Body of pancreas (tissue), 4 donors: ENCODE measurements at regions of chr4 and their contacts with region 1.

Region 1: GRCh38 chr4:68630373-68630772 is 40.1 kb downstream of the UGT2B15 start:
- DNase-seq: no peak
- ATAC-seq: no peak
- H3K4me3 ChIP-seq: no peak overlapping the region
- H3K27ac ChIP-seq: no peak overlapping the region
- H3K4me1 ChIP-seq: no peaks in the 10 kb centered on the region
- H3K27me3 ChIP-seq: no peaks in the 10 kb centered on the region
- CTCF ChIP-seq: no peak
- POLR2A ChIP-seq: no peak

Region 2: GRCh38 chr4:67437974-67438713 is 1192.2 kb before region 1 on chr4:
- intact Hi-C with region 1: no loop called
- DNase-seq: no peak
- ATAC-seq: no peak
- H3K4me3 ChIP-seq: no peak overlapping the region
- H3K27ac ChIP-seq: no peak overlapping the region
- H3K4me1 ChIP-seq: no peaks in the 10 kb centered on the region
- H3K27me3 ChIP-seq: no peaks in the 10 kb centered on the region
- CTCF ChIP-seq: no peak
- POLR2A ChIP-seq: no peak

Region 3: DNA sequence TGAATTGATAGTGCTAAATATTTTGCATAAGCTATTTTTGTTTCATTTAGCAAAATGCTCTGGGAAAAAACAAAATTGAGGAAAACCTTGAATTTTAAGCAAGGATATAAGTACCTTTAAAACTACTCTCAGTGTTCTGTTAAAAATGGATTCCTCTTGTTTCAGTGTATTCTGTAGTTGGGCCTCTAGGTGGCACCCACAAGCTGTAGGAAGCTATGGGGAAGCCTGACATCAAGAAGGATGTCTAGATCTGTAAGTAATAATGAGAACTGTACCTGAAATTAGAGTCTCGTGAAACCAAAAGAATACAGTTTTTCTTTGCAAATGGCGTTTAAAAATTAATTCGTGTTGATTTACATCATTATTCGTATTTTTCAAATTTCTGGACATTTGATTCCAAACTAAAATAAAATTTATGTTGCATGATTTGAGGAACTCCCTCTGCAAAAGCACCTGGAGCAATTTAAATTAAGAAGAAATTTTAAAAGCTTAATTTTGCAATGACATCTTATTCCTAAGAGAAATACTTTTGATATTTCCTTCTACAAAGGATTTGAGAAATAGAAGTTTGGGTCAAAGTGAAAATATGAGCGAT is 131.9 kb before region 1 on chr4:
- intact Hi-C with region 1: loop called (anchors 5 kb)
- DNase-seq: peak; percentile 73 to 77 (median 76)
- ATAC-seq: peak; percentile 95
- H3K4me3 ChIP-seq: no peak overlapping the region
- H3K27ac ChIP-seq: peak overlapping the region in 2 of 4 donors; percentile 3 to 39
- H3K4me1 ChIP-seq: peaks cover 17% of the 10 kb centered on the region
- H3K27me3 ChIP-seq: no peaks in the 10 kb centered on the region
- CTCF ChIP-seq: peak; percentile 81 to 96 (median 90)
- POLR2A ChIP-seq: no peak